Astrocyte of the cerebellum (primary cell): ENCODE measurements at regions of chr7 and their contacts with region 1.

Region 1: GRCh38 chr7:31051598-31052486 is at the start of gene ADCYAP1R1:
- DNase-seq: no peak
- H3K4me3 ChIP-seq: peak within 1 kb of the TSS; percentile 16
- CTCF ChIP-seq: no peak

Region 2: DNA sequence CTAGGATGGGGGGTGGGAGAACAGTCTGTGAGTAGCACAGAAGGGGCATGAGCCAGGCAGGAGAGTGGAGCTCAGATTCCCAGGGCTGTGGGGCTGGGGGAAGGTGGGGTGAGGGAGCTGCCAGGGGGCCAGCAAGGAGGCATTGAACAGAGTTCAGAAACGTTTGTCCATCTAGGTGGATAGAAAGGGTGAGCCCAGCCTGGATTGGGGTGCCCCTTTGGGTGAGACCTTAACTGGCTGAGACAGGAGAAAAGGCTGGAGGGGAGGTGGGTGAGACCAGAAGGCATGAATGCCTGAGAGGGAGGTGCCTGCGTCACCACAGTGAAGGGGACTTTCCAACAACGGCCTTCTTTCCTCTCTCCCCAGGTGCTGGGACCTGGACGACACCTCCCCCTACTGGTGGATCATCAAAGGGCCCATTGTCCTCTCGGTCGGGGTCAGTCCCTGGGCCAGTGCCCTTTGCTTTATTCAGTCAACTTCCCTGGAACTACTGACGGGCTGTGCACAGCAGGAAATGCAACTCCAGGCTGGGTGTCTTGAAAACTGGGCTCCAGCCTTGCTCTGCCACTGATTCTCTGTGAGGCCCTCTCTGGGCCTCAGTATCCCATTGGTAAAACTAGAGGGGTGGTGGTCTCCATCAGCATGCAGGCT is 77.1 kb before region 1 on chr7:
- in situ Hi-C with region 1: loop called (anchors 25 kb)
- DNase-seq: no peak
- H3K4me3 ChIP-seq: no peak overlapping the region
- CTCF ChIP-seq: peak; percentile 69

Region 3: DNA sequence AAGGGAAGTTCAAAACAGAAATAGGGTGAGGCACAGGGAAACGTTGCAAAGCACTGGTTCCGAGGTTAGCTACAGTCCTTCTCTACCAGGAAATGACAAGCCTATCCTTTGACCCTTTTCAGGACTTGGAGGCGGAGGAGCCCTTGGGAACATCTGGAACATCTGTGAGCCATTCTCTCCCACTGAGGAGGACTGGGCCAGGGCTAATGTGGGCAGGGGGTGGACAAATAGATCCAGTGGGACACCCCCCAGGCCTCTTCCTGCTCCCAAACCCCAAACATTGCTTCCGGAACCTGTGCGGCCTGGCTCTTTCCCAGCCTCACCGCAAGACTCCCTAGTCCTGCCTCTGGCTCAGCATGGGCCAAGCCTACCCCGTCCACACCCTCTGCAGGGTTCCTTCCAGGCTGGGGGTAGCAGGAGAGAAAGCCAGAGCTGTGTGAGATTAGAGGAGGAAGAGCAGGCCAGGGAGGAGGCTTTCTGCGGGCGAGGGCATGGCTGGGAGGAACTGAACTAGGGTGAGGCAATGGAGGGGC is 51.6 kb before region 1 on chr7:
- in situ Hi-C with region 1: no loop called
- DNase-seq: no peak
- H3K4me3 ChIP-seq: no peak overlapping the region
- CTCF ChIP-seq: no peak